ENCODE measurements at regions of chr6 and their contacts with region 1.

Region 1: DNA sequence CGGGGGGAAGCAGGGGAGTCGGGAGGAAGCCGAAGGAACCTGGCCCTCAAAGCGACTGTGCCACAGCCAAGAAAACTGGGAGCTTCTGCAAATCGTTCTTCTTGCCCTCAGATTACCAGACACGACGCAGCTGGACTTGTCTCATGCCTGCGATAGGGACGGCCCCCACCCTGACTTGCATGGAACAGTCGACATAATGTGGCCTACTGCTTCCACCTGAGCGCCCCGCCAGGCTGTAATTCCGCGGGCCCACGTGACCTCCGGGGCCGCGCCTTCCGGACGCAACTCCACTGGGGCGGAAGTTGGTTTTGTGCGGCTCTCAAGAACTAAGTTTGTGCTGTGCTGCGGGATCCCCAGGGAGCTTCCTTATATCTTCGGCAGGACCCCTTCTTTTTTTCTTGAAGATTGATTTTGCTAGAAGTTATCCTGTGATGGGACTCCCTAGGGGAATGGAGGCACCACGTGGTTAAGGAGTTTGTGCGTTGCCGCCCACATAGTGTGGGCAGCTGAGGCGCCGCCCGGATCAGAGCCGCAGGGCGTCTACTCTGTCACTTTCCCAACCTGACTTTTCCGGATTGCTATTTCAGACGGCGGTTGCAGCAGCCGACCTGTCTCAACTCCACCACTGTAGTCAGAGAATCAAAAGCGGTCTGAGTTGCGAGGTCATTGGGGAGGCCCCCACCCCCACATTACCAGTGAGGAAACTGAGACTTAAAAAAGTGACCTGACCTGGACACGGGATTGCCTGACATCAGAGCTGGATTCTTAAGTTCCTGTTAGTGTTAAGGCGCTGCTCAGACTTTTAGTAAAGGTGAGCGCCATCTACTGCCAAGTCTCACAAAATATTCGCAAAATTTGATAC is 540 bp upstream of the CD164 start:
- DNase-seq: peak; percentile 85 to 97 (median 91)
- ATAC-seq: peak; percentile 66
- H3K4me3 ChIP-seq: peak overlapping the region; percentile 61 to 78
- H3K4me3 Mint-ChIP-seq: peak overlapping the region; percentile 93
- H3K27ac ChIP-seq: peak overlapping the region; percentile 83 to 99
- H3K27ac Mint-ChIP-seq: peak overlapping the region; percentile 99
- H3K4me1 ChIP-seq: peaks cover 33% of the 10 kb centered on the region
- H3K4me1 Mint-ChIP-seq: peaks cover 45% of the 10 kb centered on the region
- H3K27me3 ChIP-seq: no peaks in the 10 kb centered on the region
- H3K27me3 Mint-ChIP-seq: no peaks in the 10 kb centered on the region
- CTCF ChIP-seq: peak; percentile 73

Region 2: DNA sequence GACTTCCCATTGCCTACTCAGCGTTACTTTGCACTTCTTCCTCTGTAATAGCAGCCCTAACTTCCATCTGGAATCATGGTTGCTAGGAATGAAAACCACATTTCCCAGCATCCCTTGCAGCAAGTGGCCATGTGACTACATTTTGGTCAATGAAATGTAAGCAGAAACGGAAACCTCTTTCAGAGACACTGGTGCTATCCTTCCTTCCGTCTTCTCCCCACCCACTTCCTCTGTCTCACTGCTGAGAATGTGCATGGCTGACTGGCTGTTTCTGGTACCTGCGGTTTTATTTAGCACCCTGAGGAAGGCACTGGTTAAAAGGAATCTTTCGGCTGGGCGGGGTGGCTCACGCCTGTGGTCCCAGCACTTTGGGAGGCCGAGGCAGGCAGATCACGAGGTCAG is 1666.1 kb before region 1 on chr6:
- CTCF ChIA-PET with region 1: no interaction called
- POLR2A ChIA-PET with region 1: no interaction called
- intact Hi-C with region 1: loop called in 1 of 2 experiments (anchors 5 kb)
- DNase-seq: peak; percentile 46 to 95 (median 76)
- ATAC-seq: peak; percentile 85
- H3K4me3 ChIP-seq: no peak overlapping the region
- H3K4me3 Mint-ChIP-seq: peak overlapping the region; percentile 68
- H3K27ac ChIP-seq: peak overlapping the region in 1 of 2 experiments; percentile 79
- H3K27ac Mint-ChIP-seq: peak overlapping the region; percentile 91
- H3K4me1 ChIP-seq: peaks cover 54% of the 10 kb centered on the region
- H3K4me1 Mint-ChIP-seq: peaks cover 77% of the 10 kb centered on the region
- H3K27me3 ChIP-seq: no peaks in the 10 kb centered on the region
- H3K27me3 Mint-ChIP-seq: no peaks in the 10 kb centered on the region
- CTCF ChIP-seq: no peak

Region 3: DNA sequence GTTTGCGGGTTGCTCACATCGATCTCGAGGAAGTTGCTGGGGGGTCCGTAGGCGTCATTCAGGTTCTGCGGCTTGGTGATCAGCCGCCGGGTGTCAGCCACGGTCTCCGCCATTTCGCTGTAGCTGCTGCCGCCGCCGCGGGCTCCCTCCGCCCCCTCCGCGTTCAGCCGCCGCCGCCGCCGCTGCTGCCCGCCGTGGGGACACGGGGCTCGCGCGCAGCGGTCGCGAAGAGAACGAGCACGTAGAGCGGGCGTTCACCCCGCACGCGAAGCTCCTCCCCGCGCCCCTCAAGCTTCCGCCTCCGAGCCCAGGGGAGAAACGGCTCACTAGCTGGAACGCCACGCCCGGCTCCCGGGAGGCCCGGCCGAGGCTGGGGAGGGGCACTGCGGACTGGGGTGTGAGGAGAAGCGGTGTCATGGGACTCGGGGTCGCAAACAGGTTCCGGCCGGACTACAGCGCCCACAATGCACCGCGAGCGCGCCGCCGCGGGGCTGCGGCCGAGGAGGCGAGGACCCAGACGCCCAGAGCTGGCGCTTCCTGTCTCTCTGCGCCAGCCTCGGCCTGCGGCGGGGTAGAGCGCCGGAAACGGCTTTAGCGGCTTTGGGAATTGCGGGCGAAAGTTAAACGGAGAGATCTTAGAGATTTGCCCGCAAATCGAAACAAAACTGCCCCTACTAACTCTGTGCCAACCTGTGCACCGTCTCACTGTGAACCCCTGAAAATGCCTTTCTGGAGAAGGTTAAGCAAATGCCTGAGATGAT is 1121.8 kb before region 1 on chr6 and contains the start of gene SNX3:
- CTCF ChIA-PET with region 1: no interaction called
- POLR2A ChIA-PET with region 1: interaction called, 8 read pairs
- intact Hi-C with region 1: loop called in 1 of 2 experiments (anchors 10 kb)
- DNase-seq: peak; percentile 76 to 95 (median 85)
- ATAC-seq: peak; percentile 79
- H3K4me3 ChIP-seq: peak within 1 kb of the TSS; percentile 64 to 76
- H3K4me3 Mint-ChIP-seq: peak within 1 kb of the TSS; percentile 89
- H3K27ac ChIP-seq: peak within 1 kb of the TSS; percentile 82 to 95
- H3K27ac Mint-ChIP-seq: peak within 1 kb of the TSS; percentile 97
- H3K4me1 ChIP-seq: peaks cover 17% of the 10 kb centered on the region
- H3K4me1 Mint-ChIP-seq: peaks cover 36% of the 10 kb centered on the region
- H3K27me3 ChIP-seq: no peaks in the 10 kb centered on the region
- H3K27me3 Mint-ChIP-seq: no peaks in the 10 kb centered on the region
- CTCF ChIP-seq: no peak
- total RNA-seq, gene SNX3: 37.0 to 40.7 TPM

Region 4: GRCh38 chr6:108782179-108783041 is 600.4 kb before region 1 on chr6:
- CTCF ChIA-PET with region 1: no interaction called
- POLR2A ChIA-PET with region 1: no interaction called
- intact Hi-C with region 1: loop called in 1 of 2 experiments (anchors 5 kb)
- DNase-seq: peak; percentile 55 to 86 (median 78)
- ATAC-seq: peak; percentile 100
- H3K4me3 ChIP-seq: peak overlapping the region; percentile 56
- H3K4me3 Mint-ChIP-seq: peak overlapping the region; percentile 85
- H3K27ac ChIP-seq: no peak overlapping the region
- H3K27ac Mint-ChIP-seq: no peak overlapping the region
- H3K4me1 ChIP-seq: peaks cover 6% of the 10 kb centered on the region
- H3K4me1 Mint-ChIP-seq: peaks cover 8% of the 10 kb centered on the region
- H3K27me3 ChIP-seq: no peaks in the 10 kb centered on the region
- H3K27me3 Mint-ChIP-seq: no peaks in the 10 kb centered on the region
- CTCF ChIP-seq: peak; percentile 69

Region 5: GRCh38 chr6:109187399-109188114 is 195.2 kb before region 1 on chr6:
- CTCF ChIA-PET with region 1: interaction called, 118 read pairs
- POLR2A ChIA-PET with region 1: interaction called, 36 read pairs
- intact Hi-C with region 1: loop called (anchors 1 kb)
- DNase-seq: peak; percentile 24 to 75 (median 64)
- ATAC-seq: peak; percentile 96
- H3K4me3 ChIP-seq: no peak overlapping the region
- H3K4me3 Mint-ChIP-seq: no peak overlapping the region
- H3K27ac ChIP-seq: no peak overlapping the region
- H3K27ac Mint-ChIP-seq: no peak overlapping the region
- H3K4me1 ChIP-seq: no peaks in the 10 kb centered on the region
- H3K4me1 Mint-ChIP-seq: peaks cover 2% of the 10 kb centered on the region
- H3K27me3 ChIP-seq: peaks cover 3 to 6% of the 10 kb centered on the region in 2 experiments
- H3K27me3 Mint-ChIP-seq: peaks cover 11% of the 10 kb centered on the region
- CTCF ChIP-seq: peak; percentile 88

Region 6: GRCh38 chr6:109482905-109483735 is 100.3 kb after region 1 on chr6 and contains the start of gene ZBTB24:
- CTCF ChIA-PET with region 1: interaction called, 7 read pairs
- POLR2A ChIA-PET with region 1: interaction called, 17 read pairs
- intact Hi-C with region 1: loop called (anchors 1 kb)
- DNase-seq: peak; percentile 75 to 96 (median 88)
- ATAC-seq: peak; percentile 85
- H3K4me3 ChIP-seq: peak within 1 kb of the TSS; percentile 65 to 69
- H3K4me3 Mint-ChIP-seq: peak within 1 kb of the TSS; percentile 95
- H3K27ac ChIP-seq: peak within 1 kb of the TSS; percentile 49 to 62
- H3K27ac Mint-ChIP-seq: peak within 1 kb of the TSS; percentile 89
- H3K4me1 ChIP-seq: peaks cover 37% of the 10 kb centered on the region
- H3K4me1 Mint-ChIP-seq: peaks cover 50% of the 10 kb centered on the region
- H3K27me3 ChIP-seq: no peaks in the 10 kb centered on the region
- H3K27me3 Mint-ChIP-seq: no peaks in the 10 kb centered on the region
- CTCF ChIP-seq: no peak
- total RNA-seq, gene ZBTB24: 10.9 to 11.2 TPM

Region 7: GRCh38 chr6:109579361-109579760 is 196.6 kb after region 1 on chr6:
- CTCF ChIA-PET with region 1: no interaction called
- POLR2A ChIA-PET with region 1: no interaction called
- intact Hi-C with region 1: no loop called
- DNase-seq: no peak
- ATAC-seq: no peak
- H3K4me3 ChIP-seq: no peak overlapping the region
- H3K4me3 Mint-ChIP-seq: no peak overlapping the region
- H3K27ac ChIP-seq: no peak overlapping the region
- H3K27ac Mint-ChIP-seq: no peak overlapping the region
- H3K4me1 ChIP-seq: no peaks in the 10 kb centered on the region
- H3K4me1 Mint-ChIP-seq: no peaks in the 10 kb centered on the region
- H3K27me3 ChIP-seq: no peaks in the 10 kb centered on the region
- H3K27me3 Mint-ChIP-seq: no peaks in the 10 kb centered on the region
- CTCF ChIP-seq: no peak

Region 8: GRCh38 chr6:110179401-110180227 is 796.8 kb after region 1 on chr6 and contains the start of gene WASF1:
- CTCF ChIA-PET with region 1: no interaction called
- POLR2A ChIA-PET with region 1: no interaction called
- intact Hi-C with region 1: loop called in 1 of 2 experiments (anchors 5 kb)
- DNase-seq: peak; percentile 77 to 95 (median 89)
- ATAC-seq: peak; percentile 84
- H3K4me3 ChIP-seq: peak within 1 kb of the TSS; percentile 83 to 96
- H3K4me3 Mint-ChIP-seq: peak within 1 kb of the TSS; percentile 77
- H3K27ac ChIP-seq: peak within 1 kb of the TSS; percentile 72 to 79
- H3K27ac Mint-ChIP-seq: peak within 1 kb of the TSS; percentile 38
- H3K4me1 ChIP-seq: peaks cover 28% of the 10 kb centered on the region
- H3K4me1 Mint-ChIP-seq: peaks cover 7% of the 10 kb centered on the region
- H3K27me3 ChIP-seq: no peaks in the 10 kb centered on the region
- H3K27me3 Mint-ChIP-seq: peaks cover 9% of the 10 kb centered on the region
- CTCF ChIP-seq: no peak
- total RNA-seq, gene WASF1: 1.1 to 1.7 TPM

Measured in CD8-positive, alpha-beta T cell (primary cell).